Activated CD4-positive, alpha-beta memory T cell treated with anti-CD3 and anti-CD28 coated beads for 36 hours (primary cell): ENCODE measurements at regions of chr15 and their contacts with region 1.

Region 1: GRCh38 chr15:48861813-48862431 is 16.0 kb upstream of the EID1 start:
- DNase-seq: peak; percentile 32
- H3K4me3 Mint-ChIP-seq: no peak overlapping the region
- H3K27ac Mint-ChIP-seq: no peak overlapping the region
- H3K4me1 Mint-ChIP-seq: peaks cover 6% of the 10 kb centered on the region
- H3K27me3 Mint-ChIP-seq: peaks cover 4% of the 10 kb centered on the region

Region 2: GRCh38 chr15:48352474-48353072 is 509.3 kb before region 1 on chr15:
- CTCF ChIA-PET with region 1: no interaction called
- POLR2A ChIA-PET with region 1: no interaction called
- intact Hi-C with region 1: loop called (anchors 10 kb)
- DNase-seq: peak; percentile 61
- H3K4me3 Mint-ChIP-seq: no peak overlapping the region
- H3K27ac Mint-ChIP-seq: no peak overlapping the region
- H3K4me1 Mint-ChIP-seq: no peaks in the 10 kb centered on the region
- H3K27me3 Mint-ChIP-seq: peaks cover 2% of the 10 kb centered on the region

Region 3: DNA sequence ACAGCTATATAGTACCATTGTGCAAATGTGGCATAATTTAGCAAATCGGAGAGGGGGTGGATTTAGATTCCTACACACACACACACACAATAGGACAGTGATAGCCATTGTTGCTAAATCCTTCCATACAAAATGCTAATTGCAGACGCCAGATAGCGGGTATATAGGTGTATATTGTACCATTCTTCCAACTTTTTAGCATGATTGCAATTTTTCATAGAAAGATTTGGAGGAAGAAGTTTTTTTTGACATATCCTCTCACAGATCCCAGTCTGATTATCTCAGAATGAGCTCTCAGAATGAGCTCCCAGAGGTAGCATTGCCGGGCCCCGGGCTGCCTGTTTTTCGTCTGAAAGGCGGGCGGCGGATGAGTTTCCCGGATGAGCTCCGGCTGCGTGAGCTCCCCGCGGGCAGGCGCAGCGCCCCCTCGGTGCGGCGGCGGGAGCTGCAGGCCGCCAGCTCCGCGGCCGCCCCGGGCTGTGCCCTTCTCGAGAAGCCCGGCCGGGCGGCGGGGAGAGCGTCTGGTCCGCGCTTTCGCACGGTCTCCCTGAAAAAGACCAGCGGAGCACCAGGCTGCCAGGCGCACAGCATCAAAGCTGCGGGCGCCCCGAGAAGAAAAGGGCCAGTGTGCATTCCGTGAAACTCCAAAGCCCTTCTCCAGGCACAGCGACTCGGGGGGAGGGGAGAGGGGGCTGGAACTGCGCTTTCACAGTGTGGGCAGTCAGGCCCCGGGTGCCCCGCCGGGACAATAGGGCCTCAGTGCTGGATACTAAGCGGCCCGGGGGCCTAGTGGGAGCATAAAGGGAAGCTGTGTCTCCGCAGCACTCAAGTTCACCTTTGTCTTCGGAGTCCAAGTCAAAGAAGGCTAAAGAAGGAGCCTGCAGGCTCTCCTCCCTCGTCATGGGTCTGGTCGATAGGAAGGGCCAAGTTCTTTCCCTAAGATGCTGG is 113.8 kb after region 1 on chr15:
- CTCF ChIA-PET with region 1: interaction called, 66 read pairs
- POLR2A ChIA-PET with region 1: no interaction called
- intact Hi-C with region 1: loop called (anchors 2 kb)
- DNase-seq: peak; percentile 83
- H3K4me3 Mint-ChIP-seq: peak overlapping the region; percentile 39
- H3K27ac Mint-ChIP-seq: no peak overlapping the region
- H3K4me1 Mint-ChIP-seq: no peaks in the 10 kb centered on the region
- H3K27me3 Mint-ChIP-seq: peaks cover 19% of the 10 kb centered on the region

Region 4: GRCh38 chr15:49145651-49146609 is 284.0 kb after region 1 on chr15:
- CTCF ChIA-PET with region 1: interaction called, 59 read pairs
- POLR2A ChIA-PET with region 1: no interaction called
- intact Hi-C with region 1: loop called (anchors 1 kb)
- DNase-seq: peak; percentile 22
- H3K4me3 Mint-ChIP-seq: no peak overlapping the region
- H3K27ac Mint-ChIP-seq: no peak overlapping the region
- H3K4me1 Mint-ChIP-seq: peaks cover 41% of the 10 kb centered on the region
- H3K27me3 Mint-ChIP-seq: no peaks in the 10 kb centered on the region

Region 5: DNA sequence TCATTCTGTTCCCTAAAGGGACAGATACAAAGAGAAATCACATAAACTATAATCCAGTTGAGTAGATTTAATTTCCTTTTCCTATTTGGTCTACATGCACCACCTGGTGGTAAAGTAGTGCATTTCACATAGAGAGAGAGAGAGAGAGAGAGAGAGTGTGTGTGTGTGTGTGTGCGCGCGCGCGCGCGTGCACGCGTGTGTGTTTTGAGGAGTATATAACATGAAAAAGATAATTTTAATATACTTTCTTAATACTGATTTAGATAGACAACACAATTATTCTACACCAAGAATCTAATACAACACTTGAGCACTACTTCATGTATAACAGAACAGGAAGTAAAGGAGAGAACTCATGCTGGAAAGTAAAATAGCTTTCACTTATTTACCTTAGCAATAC is 560.1 kb after region 1 on chr15:
- CTCF ChIA-PET with region 1: interaction called, 38 read pairs
- POLR2A ChIA-PET with region 1: no interaction called
- intact Hi-C with region 1: loop called (anchors 1 kb)
- DNase-seq: peak; percentile 27
- H3K4me3 Mint-ChIP-seq: no peak overlapping the region
- H3K27ac Mint-ChIP-seq: peak overlapping the region; percentile 48
- H3K4me1 Mint-ChIP-seq: peaks cover 3% of the 10 kb centered on the region
- H3K27me3 Mint-ChIP-seq: no peaks in the 10 kb centered on the region

Region 6: DNA sequence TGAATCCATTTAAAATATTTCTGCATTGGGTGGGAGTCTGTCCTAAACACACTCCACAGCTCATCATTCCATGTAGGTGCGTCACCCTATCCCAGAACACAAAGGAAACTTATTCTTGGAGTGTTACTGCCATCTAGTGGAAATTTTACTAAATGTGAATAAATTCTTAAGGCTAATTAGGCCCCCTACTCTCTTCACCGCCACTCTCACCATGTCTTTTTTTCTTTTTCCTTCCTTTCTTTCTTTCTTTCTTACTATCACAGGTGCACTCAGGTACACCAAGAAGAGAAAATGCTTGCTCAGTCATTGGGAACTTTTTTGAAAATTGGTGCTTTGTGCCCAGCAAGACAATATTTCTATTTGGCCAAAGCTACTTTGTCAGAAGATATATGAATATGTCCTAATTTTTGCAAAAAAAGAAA is 1283.5 kb after region 1 on chr15:
- CTCF ChIA-PET with region 1: interaction called, 7 read pairs
- POLR2A ChIA-PET with region 1: no interaction called
- intact Hi-C with region 1: loop called (anchors 1 kb)
- DNase-seq: no peak
- H3K4me3 Mint-ChIP-seq: no peak overlapping the region
- H3K27ac Mint-ChIP-seq: no peak overlapping the region
- H3K4me1 Mint-ChIP-seq: peaks cover 17% of the 10 kb centered on the region
- H3K27me3 Mint-ChIP-seq: no peaks in the 10 kb centered on the region